PC-9 (cell line): ENCODE measurements at regions of chr19 and their contacts with region 1.

Region 1: DNA sequence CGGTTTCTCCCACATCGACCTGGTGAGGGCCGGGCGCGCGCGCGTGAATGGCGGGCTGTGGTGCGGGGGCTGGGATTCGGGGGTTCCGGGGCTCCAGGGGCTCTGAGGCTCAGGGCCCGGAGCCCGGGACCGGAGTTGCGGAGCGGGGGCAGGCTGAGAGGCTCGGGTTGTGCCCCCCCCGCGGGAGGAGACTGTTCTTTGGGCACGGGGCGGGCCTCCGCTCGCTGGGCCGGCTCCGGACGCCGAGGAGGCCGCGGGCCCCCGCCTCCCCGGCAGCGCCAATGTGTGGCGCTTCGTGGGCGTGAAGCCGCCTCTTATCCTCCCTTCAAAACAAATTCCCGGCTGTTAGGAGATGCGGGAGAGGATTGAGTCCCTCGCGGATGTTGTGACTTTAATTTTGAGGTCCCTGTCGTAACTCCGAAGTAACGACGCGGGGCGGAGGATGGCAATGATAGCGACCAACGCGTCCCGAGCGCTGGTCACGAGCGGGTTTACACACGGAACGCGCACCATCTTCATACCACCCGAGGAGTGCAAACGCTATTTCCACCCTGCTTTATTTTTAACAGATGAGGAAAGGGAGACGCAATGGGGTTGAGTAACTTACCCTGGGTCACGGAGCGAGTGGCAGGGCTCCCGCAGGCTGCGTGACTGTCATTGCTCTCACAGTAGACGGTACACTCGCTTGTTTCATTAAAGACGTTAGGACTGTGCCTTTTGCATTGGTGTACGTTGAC is 536 bp downstream of the UBA2 start:
- DNase-seq: peak in 1 of 2 experiments; percentile 30
- H3K4me3 ChIP-seq: peak overlapping the region; percentile 89
- H3K27ac ChIP-seq: peak overlapping the region; percentile 7
- H3K4me1 ChIP-seq: peaks cover 18% of the 10 kb centered on the region
- H3K27me3 ChIP-seq: no peaks in the 10 kb centered on the region
- CTCF ChIP-seq: no peak

Region 2: GRCh38 chr19:34404109-34404897 is 24.4 kb before region 1 on chr19 and contains the start of gene PDCD2L:
- CTCF ChIA-PET with region 1: no interaction called
- POLR2A ChIA-PET with region 1: interaction called, 3 read pairs
- intact Hi-C with region 1: loop called (anchors 1 kb)
- DNase-seq: peak; percentile 75 to 87
- H3K4me3 ChIP-seq: peak within 1 kb of the TSS; percentile 97
- H3K27ac ChIP-seq: peak within 1 kb of the TSS; percentile 37; the same call in 1 of the 2 replicates
- H3K4me1 ChIP-seq: peaks cover 5% of the 10 kb centered on the region; the same call in 1 of the 2 replicates
- H3K27me3 ChIP-seq: no peaks in the 10 kb centered on the region
- CTCF ChIP-seq: no peak
- total RNA-seq, gene PDCD2L: 14.8 and 20.9 TPM in 2 replicates

Region 3: DNA sequence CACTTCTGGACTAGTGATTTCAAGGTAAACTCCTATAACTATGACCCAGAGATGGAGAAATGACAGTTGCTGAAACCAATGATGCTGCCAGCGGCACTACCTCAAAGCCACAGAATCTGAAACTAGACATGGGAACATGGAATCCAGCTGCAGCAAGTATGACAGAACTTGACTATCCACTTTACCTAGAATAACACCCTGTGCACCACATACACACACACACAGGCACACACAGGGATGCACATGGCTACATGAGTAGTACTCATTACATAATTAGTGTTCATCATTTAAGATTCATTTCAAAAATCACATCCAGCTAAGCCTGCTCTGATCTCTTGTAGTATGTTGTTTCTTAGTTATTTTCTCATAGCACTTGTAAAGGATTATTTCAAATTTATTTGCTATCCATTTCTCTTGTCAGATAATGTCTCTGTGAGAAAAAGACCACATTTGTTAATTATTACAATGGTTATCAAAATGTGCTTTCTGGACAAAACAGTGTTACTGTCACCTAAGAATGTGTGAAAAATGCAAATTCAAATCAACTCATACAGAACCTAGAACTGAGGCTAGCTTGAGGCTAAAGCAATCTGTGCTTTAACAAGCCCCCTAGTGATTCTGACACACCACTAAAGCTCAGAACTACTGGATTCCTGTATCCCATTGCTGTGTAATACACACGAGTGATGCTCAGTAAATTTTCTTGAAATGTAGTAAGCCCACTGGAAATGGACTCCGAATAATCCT is 112.3 kb after region 1 on chr19:
- CTCF ChIA-PET with region 1: interaction called, 10 read pairs
- POLR2A ChIA-PET with region 1: no interaction called
- intact Hi-C with region 1: no loop called
- DNase-seq: no peak
- H3K4me3 ChIP-seq: no peak overlapping the region
- H3K27ac ChIP-seq: no peak overlapping the region
- H3K4me1 ChIP-seq: no peaks in the 10 kb centered on the region
- H3K27me3 ChIP-seq: peaks cover 11% of the 10 kb centered on the region; the same call in 1 of the 2 replicates
- CTCF ChIP-seq: no peak